Common myeloid progenitor, CD34-positive (primary cell): ENCODE measurements at regions of chr3 and their contacts with region 1.

Region 1: GRCh38 chr3:3200632-3201212 is 21.2 kb upstream of the CRBN start:
- DNase-seq: peak; percentile 65 to 78 (median 76)
- H3K4me3 ChIP-seq: peak overlapping the region in 1 of 7 experiments; percentile 24
- H3K27ac ChIP-seq: no peak overlapping the region
- H3K4me1 ChIP-seq: peaks cover 4 to 20% (median 10%) of the 10 kb centered on the region in 4 experiments
- H3K27me3 ChIP-seq: no peaks in the 10 kb centered on the region

Region 2: GRCh38 chr3:3560591-3561311 is 360.0 kb after region 1 on chr3:
- CTCF ChIA-PET with region 1: no interaction called
- POLR2A ChIA-PET with region 1: no interaction called
- DNase-seq: no peak
- H3K4me3 ChIP-seq: no peak overlapping the region
- H3K27ac ChIP-seq: no peak overlapping the region
- H3K4me1 ChIP-seq: no peaks in the 10 kb centered on the region
- H3K27me3 ChIP-seq: no peaks in the 10 kb centered on the region

Region 3: GRCh38 chr3:3998140-3998922 is 797.6 kb after region 1 on chr3:
- CTCF ChIA-PET with region 1: interaction called, 28 read pairs
- POLR2A ChIA-PET with region 1: no interaction called
- DNase-seq: peak; percentile 62 to 75 (median 72)
- H3K4me3 ChIP-seq: no peak overlapping the region
- H3K27ac ChIP-seq: no peak overlapping the region
- H3K4me1 ChIP-seq: no peaks in the 10 kb centered on the region
- H3K27me3 ChIP-seq: no peaks in the 10 kb centered on the region

Region 4: DNA sequence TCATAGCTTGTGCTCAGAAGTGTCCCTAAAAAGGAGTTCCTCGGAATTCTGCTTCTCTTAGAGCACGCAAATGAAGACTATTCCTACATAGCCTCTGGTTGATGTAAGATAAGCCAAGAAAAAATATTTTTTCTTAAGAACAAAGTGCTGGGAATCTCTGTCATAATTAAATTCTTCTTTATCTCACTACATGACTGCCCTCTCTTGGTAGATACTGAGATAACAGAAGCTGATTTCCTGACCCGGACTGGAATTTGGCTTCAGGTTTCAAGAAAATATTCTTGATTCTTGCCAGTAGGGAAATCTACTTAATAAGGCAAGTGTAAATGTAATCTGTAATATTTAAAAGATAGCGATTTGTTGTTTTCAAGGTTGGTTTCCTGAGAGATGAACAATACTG is 1071.1 kb after region 1 on chr3:
- CTCF ChIA-PET with region 1: interaction called, 39 read pairs
- POLR2A ChIA-PET with region 1: no interaction called
- DNase-seq: peak; percentile 56 to 74 (median 65)
- H3K4me3 ChIP-seq: peak overlapping the region in 1 of 7 experiments; percentile 36
- H3K27ac ChIP-seq: no peak overlapping the region
- H3K4me1 ChIP-seq: peaks cover 15 to 24% (median 19%) of the 10 kb centered on the region in 4 experiments
- H3K27me3 ChIP-seq: no peaks in the 10 kb centered on the region

Region 5: GRCh38 chr3:4290272-4290893 is 1089.7 kb after region 1 on chr3:
- CTCF ChIA-PET with region 1: interaction called, 39 read pairs
- POLR2A ChIA-PET with region 1: no interaction called
- DNase-seq: peak; percentile 54 to 75 (median 70)
- H3K4me3 ChIP-seq: no peak overlapping the region
- H3K27ac ChIP-seq: no peak overlapping the region
- H3K4me1 ChIP-seq: peaks cover 8 to 16% (median 12%) of the 10 kb centered on the region in 4 experiments
- H3K27me3 ChIP-seq: no peaks in the 10 kb centered on the region